ENCODE measurements at regions of chr5 and their contacts with region 1.

Region 1: DNA sequence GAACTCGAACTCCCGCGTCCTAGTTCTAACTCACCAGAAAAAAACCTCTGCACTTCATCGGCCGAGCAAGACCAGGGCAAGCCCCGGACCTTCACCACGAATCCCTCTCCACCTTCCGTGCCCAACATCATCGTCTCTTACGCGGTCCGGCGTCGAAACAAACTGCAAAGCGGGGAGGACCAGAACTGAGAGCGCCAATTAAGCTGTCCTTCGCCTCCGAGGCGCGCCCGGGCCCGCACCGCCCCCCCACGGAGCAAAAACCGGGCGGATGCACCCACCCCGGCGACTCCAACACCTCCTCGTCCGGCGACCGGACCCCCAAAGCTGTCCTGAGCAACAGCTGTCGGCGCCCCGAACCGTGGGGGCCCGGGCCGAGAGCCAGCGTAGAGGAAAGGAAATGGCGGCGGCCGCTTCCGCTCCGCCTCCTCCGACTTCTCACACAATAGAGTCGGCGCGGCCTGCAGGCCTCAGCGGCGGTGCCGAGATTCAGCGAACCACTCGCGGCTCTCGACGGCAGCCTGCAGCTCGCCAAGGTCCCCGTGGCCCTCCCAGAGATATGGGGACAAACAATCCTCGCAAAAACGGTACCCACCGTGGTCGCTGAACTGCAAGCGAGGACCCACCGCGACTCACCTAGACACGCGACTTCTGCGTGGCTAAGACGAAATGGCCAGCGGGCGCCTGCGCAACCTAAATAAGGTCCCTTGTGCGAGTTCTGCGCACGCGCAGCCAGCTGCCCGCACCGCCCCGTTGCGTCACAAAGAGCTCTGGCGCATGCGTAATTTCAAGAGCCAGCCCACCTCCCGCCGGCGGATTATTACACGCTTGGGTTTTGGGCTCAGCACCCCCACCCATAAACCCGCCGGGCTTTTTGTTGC is at the start of gene HNRNPH1:
- DNase-seq: peak; percentile 93
- ATAC-seq: peak; percentile 80
- H3K4me3 Mint-ChIP-seq: peak within 1 kb of the TSS; percentile 98
- H3K27ac Mint-ChIP-seq: peak within 1 kb of the TSS; percentile 99
- H3K4me1 Mint-ChIP-seq: peaks cover 50% of the 10 kb centered on the region
- H3K27me3 Mint-ChIP-seq: no peaks in the 10 kb centered on the region
- CTCF ChIP-seq: no peak
- total RNA-seq, gene HNRNPH1: 1,061 and 1,210 TPM in 2 replicates

Region 2: GRCh38 chr5:179060116-179061008 is 562.9 kb before region 1 on chr5 and contains the start of gene ZNF354C:
- CTCF ChIA-PET with region 1: no interaction called
- POLR2A ChIA-PET with region 1: interaction called, 10 read pairs
- intact Hi-C with region 1: no loop called
- DNase-seq: peak; percentile 80
- ATAC-seq: peak; percentile 97
- H3K4me3 Mint-ChIP-seq: peak within 1 kb of the TSS; percentile 92
- H3K27ac Mint-ChIP-seq: peak within 1 kb of the TSS; percentile 86
- H3K4me1 Mint-ChIP-seq: peaks cover 20% of the 10 kb centered on the region
- H3K27me3 Mint-ChIP-seq: no peaks in the 10 kb centered on the region
- CTCF ChIP-seq: no peak
- total RNA-seq, gene ZNF354C: 6.3 and 7.1 TPM in 2 replicates

Region 3: DNA sequence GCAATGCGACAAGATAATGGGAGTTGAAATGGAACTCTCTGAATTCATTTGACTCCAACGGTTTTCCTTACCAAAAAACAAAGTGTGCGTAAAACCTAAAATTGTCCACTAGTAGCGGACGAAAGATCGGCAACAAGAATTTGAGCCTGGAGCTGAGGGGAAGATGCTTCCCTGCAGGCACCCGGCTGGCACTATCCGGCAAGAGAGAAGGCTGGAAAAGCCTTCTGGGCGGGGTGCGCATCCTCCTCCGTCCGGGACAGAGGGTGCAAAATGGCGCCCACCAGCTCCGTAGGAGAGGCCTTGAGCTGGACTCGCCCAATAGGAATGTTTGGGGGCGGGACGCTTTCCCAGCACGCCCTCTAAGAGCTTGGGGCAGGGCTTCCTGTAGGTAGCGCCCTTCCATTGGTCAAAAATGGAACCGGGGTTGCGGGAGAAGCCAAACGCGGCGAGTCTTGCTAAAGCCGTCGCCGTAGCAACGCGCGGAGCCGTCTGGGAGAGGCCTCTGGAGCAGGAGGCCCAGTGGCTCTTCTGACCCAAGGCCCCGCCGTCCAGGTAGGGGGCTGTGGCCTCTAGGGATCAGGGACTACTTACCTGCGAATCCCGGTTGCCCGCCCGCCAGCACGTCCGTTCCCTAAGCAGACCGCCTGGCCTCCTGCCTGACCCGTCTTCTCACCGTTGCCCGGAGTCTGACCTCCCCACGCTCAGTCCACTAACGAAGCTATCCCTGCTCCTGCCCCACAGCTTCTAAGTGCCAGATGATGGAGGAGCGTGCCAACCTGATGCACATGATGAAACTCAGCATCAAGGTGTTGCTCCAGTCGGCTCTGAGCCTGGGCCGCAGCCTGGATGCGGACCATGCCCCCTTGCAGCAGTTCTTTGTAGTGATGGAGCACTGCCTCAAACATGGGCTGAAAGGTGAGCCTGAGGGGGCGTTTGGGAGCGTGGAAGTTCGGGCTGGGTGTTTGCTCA is 63.7 kb before region 1 on chr5:
- CTCF ChIA-PET with region 1: no interaction called
- POLR2A ChIA-PET with region 1: interaction called, 26 read pairs
- intact Hi-C with region 1: no loop called
- DNase-seq: peak; percentile 64
- ATAC-seq: peak; percentile 100
- H3K4me3 Mint-ChIP-seq: peak overlapping the region; percentile 86
- H3K27ac Mint-ChIP-seq: peak overlapping the region; percentile 84
- H3K4me1 Mint-ChIP-seq: peaks cover 17% of the 10 kb centered on the region
- H3K27me3 Mint-ChIP-seq: no peaks in the 10 kb centered on the region
- CTCF ChIP-seq: no peak

Region 4: DNA sequence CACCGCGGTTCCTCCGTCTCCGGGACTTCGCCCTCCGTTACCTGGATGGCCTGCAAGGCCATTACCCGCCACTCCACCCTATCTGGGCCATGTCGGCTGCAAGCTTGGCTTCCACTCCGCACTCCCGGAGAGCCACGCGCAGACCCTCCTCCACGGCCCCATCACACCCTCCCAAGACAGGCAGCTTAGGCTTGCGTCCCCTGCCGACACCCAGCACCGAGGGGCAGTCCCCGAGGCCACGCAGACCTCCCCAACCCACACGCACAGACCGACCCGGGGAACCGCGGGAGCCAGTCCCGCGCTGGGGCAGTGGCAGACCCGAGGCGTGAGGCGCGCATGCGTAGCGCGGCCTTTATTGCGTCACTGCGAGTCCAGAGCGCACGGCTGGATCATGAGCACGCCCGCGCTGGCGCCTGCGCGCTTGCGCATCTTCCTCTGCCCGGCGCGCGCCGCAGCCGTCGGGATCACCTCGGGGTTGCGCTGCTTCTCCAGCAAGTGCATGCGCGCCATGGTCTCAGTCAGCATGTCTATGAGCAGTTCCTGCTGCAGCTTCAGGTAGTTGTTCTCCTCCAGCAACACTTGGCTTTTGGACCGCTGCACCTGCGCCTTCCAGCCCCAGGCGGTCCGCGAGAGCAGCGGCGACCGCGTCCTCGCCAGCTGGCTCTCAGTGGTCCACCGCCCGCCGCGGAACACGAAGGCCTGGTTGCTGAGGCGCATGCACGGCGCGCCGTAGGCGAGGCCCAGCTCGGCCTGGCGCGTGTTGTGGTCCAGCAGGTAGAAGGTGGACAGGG is 55.2 kb after region 1 on chr5:
- CTCF ChIA-PET with region 1: no interaction called
- POLR2A ChIA-PET with region 1: interaction called, 30 read pairs
- intact Hi-C with region 1: loop called (anchors 1 kb)
- DNase-seq: peak; percentile 91
- ATAC-seq: peak; percentile 91
- H3K4me3 Mint-ChIP-seq: peak overlapping the region; percentile 96
- H3K27ac Mint-ChIP-seq: peak overlapping the region; percentile 94
- H3K4me1 Mint-ChIP-seq: peaks cover 32% of the 10 kb centered on the region
- H3K27me3 Mint-ChIP-seq: no peaks in the 10 kb centered on the region
- CTCF ChIP-seq: no peak

Region 5: GRCh38 chr5:179795863-179796833 is 172.9 kb after region 1 on chr5:
- CTCF ChIA-PET with region 1: no interaction called
- POLR2A ChIA-PET with region 1: interaction called, 4 read pairs
- intact Hi-C with region 1: loop called (anchors 10 kb)
- DNase-seq: peak; percentile 78
- ATAC-seq: peak; percentile 78
- H3K4me3 Mint-ChIP-seq: peak overlapping the region; percentile 64
- H3K27ac Mint-ChIP-seq: peak overlapping the region; percentile 7
- H3K4me1 Mint-ChIP-seq: peaks cover 29% of the 10 kb centered on the region
- H3K27me3 Mint-ChIP-seq: no peaks in the 10 kb centered on the region
- CTCF ChIP-seq: peak; percentile 32

Region 6: DNA sequence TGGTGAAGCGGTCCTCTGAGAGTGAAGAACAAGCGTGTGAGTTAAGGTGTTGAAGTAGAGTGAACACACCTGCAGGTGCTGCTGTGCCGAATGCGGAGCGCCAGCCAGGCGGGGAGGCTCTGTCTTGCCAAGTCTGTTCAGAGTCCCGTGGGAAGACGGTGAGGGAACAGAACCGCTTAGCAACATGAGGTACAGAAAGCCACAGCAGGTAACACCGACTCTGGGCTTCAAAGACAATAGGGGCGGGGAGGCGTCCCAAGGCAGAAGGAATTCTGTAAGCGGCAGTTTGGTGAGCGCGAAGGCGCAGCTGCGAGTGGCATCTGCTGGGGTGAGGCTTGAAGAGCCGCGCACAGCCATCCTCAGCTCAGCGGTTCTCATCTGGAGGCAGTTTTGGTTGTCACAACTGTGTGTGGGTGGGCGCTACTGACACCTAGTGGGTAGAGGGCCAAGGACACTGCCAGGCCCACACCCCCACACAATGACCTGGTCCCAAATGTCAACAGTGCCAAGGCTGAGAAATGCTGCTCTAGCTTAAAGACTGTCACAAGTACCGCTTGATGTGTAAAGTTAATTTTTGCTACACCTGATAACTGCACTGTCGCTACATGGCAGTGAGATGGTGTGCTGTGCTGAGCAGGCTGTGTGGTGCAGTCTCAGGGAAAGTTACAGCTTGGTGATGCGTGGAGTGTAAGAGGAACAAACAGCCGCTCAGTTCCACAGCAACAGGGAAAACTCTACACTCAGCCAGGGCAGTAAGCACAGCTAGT is 351.9 kb after region 1 on chr5:
- CTCF ChIA-PET with region 1: no interaction called
- POLR2A ChIA-PET with region 1: interaction called, 13 read pairs
- intact Hi-C with region 1: loop called (anchors 5 kb)
- DNase-seq: peak; percentile 58
- ATAC-seq: peak; percentile 84
- H3K4me3 Mint-ChIP-seq: no peak overlapping the region
- H3K27ac Mint-ChIP-seq: peak overlapping the region; percentile 76
- H3K4me1 Mint-ChIP-seq: peaks cover 51% of the 10 kb centered on the region
- H3K27me3 Mint-ChIP-seq: no peaks in the 10 kb centered on the region
- CTCF ChIP-seq: no peak